Activated CD8-positive, alpha-beta T cell treated with anti-CD3 and anti-CD28 coated beads, Interleukin-2, amount 10 ng/mL, durations not matched to agents 7 days and 5 days (primary cell): ENCODE measurements at regions of chr10 and their contacts with region 1.

Region 1: DNA sequence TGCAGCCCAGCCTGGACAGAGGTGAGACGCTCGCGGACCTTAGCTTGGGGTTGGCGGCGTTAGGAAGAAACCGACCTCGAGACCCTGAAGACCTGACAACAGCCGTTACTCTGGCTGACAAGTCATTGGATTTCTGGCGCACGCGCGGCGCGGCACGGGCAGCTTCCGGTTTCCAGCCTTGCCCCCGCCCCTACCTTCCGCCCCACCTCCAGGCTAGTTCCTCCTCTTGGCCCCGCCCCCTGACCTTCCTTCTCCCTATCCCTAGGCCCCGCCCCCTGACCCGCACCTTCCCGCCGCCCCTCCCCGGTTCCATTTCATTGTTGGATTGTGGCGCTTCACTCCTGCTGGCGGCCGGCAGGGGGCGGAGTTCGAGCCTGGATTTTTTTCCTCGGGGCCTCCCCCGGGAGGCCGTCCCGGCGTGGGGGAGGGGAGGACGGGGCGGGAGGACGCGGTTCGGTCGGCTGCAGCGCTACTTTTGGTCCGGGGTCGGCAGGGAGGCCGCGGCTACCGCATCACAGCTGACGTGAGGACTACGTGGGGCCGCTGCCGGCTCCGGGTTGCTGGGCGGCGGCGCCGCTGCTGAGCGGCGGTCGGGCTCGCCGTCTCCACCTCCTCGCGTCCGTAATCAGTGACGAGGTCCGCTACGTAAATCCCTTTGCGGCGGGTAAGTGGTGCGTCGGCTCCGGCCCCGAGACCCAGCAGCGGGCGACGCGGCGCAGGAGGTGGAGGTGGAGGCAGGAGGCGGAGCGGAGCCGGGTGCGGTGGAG is at the start of gene CREM:
- DNase-seq: peak; percentile 100
- ATAC-seq: peak; percentile 82
- H3K4me3 Mint-ChIP-seq: peak within 1 kb of the TSS; percentile 86
- H3K27ac Mint-ChIP-seq: peak within 1 kb of the TSS; percentile 93
- H3K4me1 Mint-ChIP-seq: peaks cover 53% of the 10 kb centered on the region
- H3K27me3 Mint-ChIP-seq: no peaks in the 10 kb centered on the region
- total RNA-seq, gene CREM: 78.3 to 84.1 TPM

Region 2: DNA sequence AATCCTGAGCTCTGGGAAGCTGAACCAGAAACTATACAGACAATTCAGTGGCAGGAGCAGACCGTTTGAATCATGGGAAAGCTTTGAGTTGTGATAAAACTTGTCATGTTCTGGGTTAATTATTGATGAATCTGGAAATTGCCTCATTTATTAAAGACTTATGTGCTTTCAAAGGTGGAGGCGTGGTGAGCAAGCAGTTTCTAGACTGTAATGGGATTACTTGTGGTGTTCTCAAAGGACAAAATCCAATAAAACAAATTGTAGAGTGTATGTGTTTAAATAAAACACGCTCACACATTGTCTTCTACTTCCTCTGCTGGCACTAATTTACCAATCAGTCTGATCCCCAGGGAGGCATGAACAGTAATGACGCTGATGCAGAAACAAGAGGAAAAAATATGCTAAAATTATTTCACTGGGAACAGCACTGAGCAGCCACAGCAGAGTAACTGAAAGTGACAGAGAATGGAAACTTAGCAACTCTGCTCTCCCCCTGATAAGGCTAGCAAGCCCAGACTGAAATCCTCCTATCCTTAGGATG is 336.7 kb before region 1 on chr10:
- CTCF ChIA-PET with region 1: no interaction called
- POLR2A ChIA-PET with region 1: no interaction called
- DNase-seq: no peak
- ATAC-seq: no peak
- H3K4me3 Mint-ChIP-seq: no peak overlapping the region
- H3K27ac Mint-ChIP-seq: no peak overlapping the region
- H3K4me1 Mint-ChIP-seq: no peaks in the 10 kb centered on the region
- H3K27me3 Mint-ChIP-seq: peaks cover 2% of the 10 kb centered on the region

Region 3: GRCh38 chr10:35040760-35041501 is 85.8 kb before region 1 on chr10:
- CTCF ChIA-PET with region 1: no interaction called
- POLR2A ChIA-PET with region 1: no interaction called
- DNase-seq: no peak
- ATAC-seq: no peak
- H3K4me3 Mint-ChIP-seq: no peak overlapping the region
- H3K27ac Mint-ChIP-seq: peak overlapping the region; percentile 2
- H3K4me1 Mint-ChIP-seq: no peaks in the 10 kb centered on the region
- H3K27me3 Mint-ChIP-seq: no peaks in the 10 kb centered on the region

Region 4: GRCh38 chr10:35090162-35090954 is 36.4 kb before region 1 on chr10 and contains the start of gene CUL2:
- CTCF ChIA-PET with region 1: interaction called, 3 read pairs
- POLR2A ChIA-PET with region 1: interaction called, 18 read pairs
- DNase-seq: peak; percentile 93
- ATAC-seq: peak; percentile 96
- H3K4me3 Mint-ChIP-seq: peak within 1 kb of the TSS; percentile 96
- H3K27ac Mint-ChIP-seq: peak within 1 kb of the TSS; percentile 97
- H3K4me1 Mint-ChIP-seq: peaks cover 43% of the 10 kb centered on the region
- H3K27me3 Mint-ChIP-seq: peaks cover 5% of the 10 kb centered on the region
- total RNA-seq, gene CUL2: 33.8 to 38.7 TPM

Region 5: DNA sequence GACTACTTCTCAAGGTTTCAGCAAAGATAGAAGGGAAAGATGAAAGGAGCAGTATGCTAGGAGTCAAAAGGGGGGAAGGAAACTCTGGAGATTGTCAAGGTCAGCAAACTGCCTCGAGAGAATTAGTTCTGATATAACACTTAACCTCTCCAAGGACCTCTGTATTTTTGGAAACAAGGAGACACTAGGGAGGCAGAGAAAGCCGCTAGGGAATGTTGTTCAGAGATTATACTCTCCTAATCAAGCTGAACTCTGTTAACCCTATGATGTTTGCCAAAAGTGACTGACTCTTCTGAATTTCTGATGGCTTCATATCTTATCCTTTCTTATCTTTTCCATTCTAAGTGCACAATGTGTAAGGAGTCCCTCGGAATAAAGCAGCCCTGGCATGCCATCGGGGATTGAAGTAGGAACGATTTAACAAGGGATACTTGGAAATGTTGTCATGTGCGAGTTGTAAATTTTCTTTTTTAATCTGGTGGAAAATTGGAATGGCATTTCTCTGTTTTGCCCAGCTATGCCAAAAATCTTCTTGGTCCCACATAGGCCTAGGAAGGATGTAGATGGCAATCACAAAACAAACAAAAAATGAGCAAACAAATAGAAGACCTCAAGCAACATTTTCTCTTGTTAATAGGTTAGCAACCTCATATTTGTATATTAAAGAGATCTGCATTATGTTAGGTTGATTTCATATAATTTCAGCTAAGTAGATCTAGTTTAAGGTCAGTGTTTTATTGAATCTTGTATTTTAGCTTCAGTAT is 27.2 kb after region 1 on chr10:
- CTCF ChIA-PET with region 1: interaction called, 14 read pairs
- POLR2A ChIA-PET with region 1: interaction called, 62 read pairs
- DNase-seq: no peak
- ATAC-seq: no peak
- H3K4me3 Mint-ChIP-seq: no peak overlapping the region
- H3K27ac Mint-ChIP-seq: peak overlapping the region; percentile 24
- H3K4me1 Mint-ChIP-seq: peaks cover 46% of the 10 kb centered on the region
- H3K27me3 Mint-ChIP-seq: no peaks in the 10 kb centered on the region

Region 6: DNA sequence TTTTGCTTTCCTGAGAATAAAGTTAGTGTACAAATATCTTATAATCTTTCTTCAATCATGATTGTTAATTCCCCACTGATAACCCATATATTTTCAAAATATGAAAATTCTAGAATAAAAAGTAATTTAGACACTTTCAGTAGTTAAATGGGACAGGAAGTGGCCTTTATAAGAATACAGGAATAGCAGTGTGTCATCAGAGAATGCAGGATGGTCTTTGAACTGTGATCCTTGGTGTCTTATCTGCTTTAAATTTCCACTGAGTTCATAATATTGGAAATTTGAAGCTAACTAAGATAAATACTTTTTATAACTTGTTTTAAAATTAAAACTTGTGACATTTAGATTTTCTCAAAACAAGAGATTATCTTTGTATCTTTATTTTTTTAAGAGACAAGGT is 75.3 kb after region 1 on chr10:
- CTCF ChIA-PET with region 1: interaction called, 31 read pairs
- POLR2A ChIA-PET with region 1: interaction called, 201 read pairs
- DNase-seq: no peak
- ATAC-seq: peak; percentile 31
- H3K4me3 Mint-ChIP-seq: no peak overlapping the region
- H3K27ac Mint-ChIP-seq: peak overlapping the region; percentile 63
- H3K4me1 Mint-ChIP-seq: peaks cover 68% of the 10 kb centered on the region
- H3K27me3 Mint-ChIP-seq: no peaks in the 10 kb centered on the region

Region 7: GRCh38 chr10:35208536-35208935 is 81.8 kb after region 1 on chr10:
- CTCF ChIA-PET with region 1: interaction called, 346 read pairs
- POLR2A ChIA-PET with region 1: interaction called, 76 read pairs
- DNase-seq: peak; percentile 82
- ATAC-seq: peak; percentile 91
- H3K4me3 Mint-ChIP-seq: peak overlapping the region; percentile 74
- H3K27ac Mint-ChIP-seq: peak overlapping the region; percentile 97
- H3K4me1 Mint-ChIP-seq: peaks cover 78% of the 10 kb centered on the region
- H3K27me3 Mint-ChIP-seq: no peaks in the 10 kb centered on the region

Region 8: GRCh38 chr10:35218339-35218955 is 91.7 kb after region 1 on chr10:
- CTCF ChIA-PET with region 1: interaction called, 346 read pairs
- POLR2A ChIA-PET with region 1: interaction called, 76 read pairs
- DNase-seq: peak; percentile 93
- ATAC-seq: peak; percentile 81
- H3K4me3 Mint-ChIP-seq: no peak overlapping the region
- H3K27ac Mint-ChIP-seq: peak overlapping the region; percentile 85
- H3K4me1 Mint-ChIP-seq: peaks cover 40% of the 10 kb centered on the region
- H3K27me3 Mint-ChIP-seq: no peaks in the 10 kb centered on the region